HepG2 (cell line): ENCODE measurements at regions of chr16 and their contacts with region 1.

Region 1: DNA sequence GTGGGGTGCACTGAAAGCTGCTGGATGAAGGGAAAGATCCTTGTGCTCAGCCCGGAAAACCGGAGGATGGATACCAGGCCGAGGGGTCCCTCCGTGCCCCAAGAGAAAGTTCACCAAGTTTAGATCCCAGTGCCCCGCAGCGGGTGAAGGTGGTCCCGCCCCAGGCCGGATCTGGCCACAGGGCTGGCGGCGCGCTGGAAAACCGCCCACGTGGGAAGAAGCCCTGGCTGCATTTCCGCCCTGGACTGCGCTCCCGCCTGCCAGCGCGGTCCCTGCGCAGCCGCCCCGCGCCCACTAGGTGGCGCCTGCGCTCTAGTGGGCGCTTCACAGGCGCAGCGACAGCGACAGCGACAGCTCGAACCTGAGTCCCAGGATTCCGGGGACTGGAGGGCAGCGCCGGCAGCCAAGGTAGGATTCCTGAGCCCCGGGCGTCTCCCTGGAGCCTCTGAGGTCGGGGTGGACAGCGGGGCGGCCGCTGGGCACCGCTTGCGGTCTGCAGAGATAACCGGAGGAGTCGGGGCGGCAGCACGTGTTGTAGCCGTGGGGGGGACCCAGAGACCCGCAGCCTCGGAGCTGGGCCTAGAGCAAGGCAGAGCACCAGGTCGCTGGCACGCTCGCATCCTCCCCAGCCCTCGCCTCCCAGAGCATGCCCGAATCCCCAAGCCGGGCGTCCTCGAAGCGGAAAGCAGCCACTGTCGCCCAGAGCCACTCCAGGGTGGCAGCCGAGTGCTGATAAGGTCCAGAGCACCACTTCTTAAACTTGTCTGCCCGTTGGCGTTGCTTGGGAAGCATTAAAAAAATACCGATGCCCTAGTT is at the start of gene CHD9:
- DNase-seq: peak; percentile 90
- ATAC-seq: peak; percentile 87
- H3K4me3 ChIP-seq: peak within 1 kb of the TSS; percentile 73 to 88 (median 76)
- H3K27ac ChIP-seq: peak within 1 kb of the TSS; percentile 85
- H3K4me1 ChIP-seq: peaks cover 74% of the 10 kb centered on the region
- H3K27me3 ChIP-seq: no peaks in the 10 kb centered on the region; a peak in 1 of 5 replicates
- CTCF ChIP-seq: peak; percentile 100
- EP300 ChIP-seq: peak in 1 of 2 experiments; percentile 33; a peak in 1 of 4 replicates
- POLR2A ChIP-seq: peak; percentile 64 to 70
- RAD21 ChIP-seq: peak; percentile 100
- total RNA-seq, gene CHD9: 27.7 and 31.0 TPM in 2 replicates

Region 2: GRCh38 chr16:53099318-53100130 is 44.6 kb after region 1 on chr16:
- CTCF ChIA-PET with region 1: no interaction called
- POLR2A ChIA-PET with region 1: interaction called, 22 read pairs
- in situ Hi-C with region 1: no loop called
- intact Hi-C with region 1: loop called (anchors 1 kb)
- DNase-seq: peak; percentile 88
- ATAC-seq: peak; percentile 94
- H3K4me3 ChIP-seq: peak overlapping the region; percentile 57 to 74 (median 67)
- H3K27ac ChIP-seq: peak overlapping the region; percentile 78
- H3K4me1 ChIP-seq: peaks cover 41% of the 10 kb centered on the region
- H3K27me3 ChIP-seq: no peaks in the 10 kb centered on the region; a peak in 1 of 5 replicates
- CTCF ChIP-seq: no peak
- EP300 ChIP-seq: peak in 1 of 2 experiments; percentile 31; a peak in 1 of 4 replicates
- POLR2A ChIP-seq: peak; percentile 61 to 83
- RAD21 ChIP-seq: 0 out of 2 replicates have a peak, but pooled peaks have one; percentile 50

Region 3: DNA sequence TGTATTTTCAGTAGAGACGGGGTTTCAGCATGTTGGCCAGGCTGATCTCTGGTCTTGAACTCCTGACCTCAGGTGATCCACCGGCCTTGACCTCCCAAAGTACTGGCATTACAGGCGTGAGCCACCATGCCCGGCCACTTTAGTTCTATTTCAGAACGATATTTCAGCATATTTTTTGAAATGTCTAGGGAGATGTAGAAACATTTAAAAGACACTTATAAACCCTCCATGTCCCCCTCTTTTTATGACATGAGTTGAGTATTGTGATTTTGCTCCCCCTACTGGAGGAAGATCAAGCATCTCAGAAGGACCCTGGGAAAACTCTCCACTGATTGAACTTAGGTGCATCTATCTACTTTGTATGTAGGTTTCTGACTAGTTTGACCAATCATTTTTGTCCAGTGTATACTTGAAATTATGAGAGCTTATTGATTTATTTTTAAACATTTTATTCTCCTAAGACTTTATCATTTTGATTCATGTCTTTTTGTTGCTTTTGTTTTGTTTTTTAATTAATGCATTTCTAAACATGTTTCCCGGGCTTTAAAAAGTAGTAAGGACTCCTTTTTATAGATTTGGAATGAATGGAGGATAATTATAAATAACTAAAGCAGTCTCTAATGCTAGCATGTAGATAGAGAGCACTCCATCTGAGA is 105.0 kb after region 1 on chr16:
- CTCF ChIA-PET with region 1: interaction called, 23 read pairs
- POLR2A ChIA-PET with region 1: interaction called, 3 read pairs
- in situ Hi-C with region 1: loop called (anchors 10 kb)
- intact Hi-C with region 1: loop called (anchors 1 kb)
- DNase-seq: peak; percentile 60
- ATAC-seq: peak; percentile 87
- H3K4me3 ChIP-seq: no peak overlapping the region
- H3K27ac ChIP-seq: no peak overlapping the region
- H3K4me1 ChIP-seq: peaks cover 5% of the 10 kb centered on the region
- H3K27me3 ChIP-seq: no peaks in the 10 kb centered on the region
- CTCF ChIP-seq: peak; percentile 67
- EP300 ChIP-seq: no peak
- POLR2A ChIP-seq: no peak
- RAD21 ChIP-seq: no peak

Region 4: GRCh38 chr16:53220585-53220984 is 165.7 kb after region 1 on chr16:
- CTCF ChIA-PET with region 1: no interaction called
- POLR2A ChIA-PET with region 1: no interaction called
- in situ Hi-C with region 1: no loop called
- intact Hi-C with region 1: loop called (anchors 1 kb)
- DNase-seq: peak; percentile 20
- ATAC-seq: peak; percentile 66; the same call in 2 of the 3 replicates
- H3K4me3 ChIP-seq: no peak overlapping the region
- H3K27ac ChIP-seq: no peak overlapping the region
- H3K4me1 ChIP-seq: no peaks in the 10 kb centered on the region
- H3K27me3 ChIP-seq: no peaks in the 10 kb centered on the region
- CTCF ChIP-seq: peak; percentile 53
- EP300 ChIP-seq: no peak
- POLR2A ChIP-seq: no peak
- RAD21 ChIP-seq: no peak

Region 5: DNA sequence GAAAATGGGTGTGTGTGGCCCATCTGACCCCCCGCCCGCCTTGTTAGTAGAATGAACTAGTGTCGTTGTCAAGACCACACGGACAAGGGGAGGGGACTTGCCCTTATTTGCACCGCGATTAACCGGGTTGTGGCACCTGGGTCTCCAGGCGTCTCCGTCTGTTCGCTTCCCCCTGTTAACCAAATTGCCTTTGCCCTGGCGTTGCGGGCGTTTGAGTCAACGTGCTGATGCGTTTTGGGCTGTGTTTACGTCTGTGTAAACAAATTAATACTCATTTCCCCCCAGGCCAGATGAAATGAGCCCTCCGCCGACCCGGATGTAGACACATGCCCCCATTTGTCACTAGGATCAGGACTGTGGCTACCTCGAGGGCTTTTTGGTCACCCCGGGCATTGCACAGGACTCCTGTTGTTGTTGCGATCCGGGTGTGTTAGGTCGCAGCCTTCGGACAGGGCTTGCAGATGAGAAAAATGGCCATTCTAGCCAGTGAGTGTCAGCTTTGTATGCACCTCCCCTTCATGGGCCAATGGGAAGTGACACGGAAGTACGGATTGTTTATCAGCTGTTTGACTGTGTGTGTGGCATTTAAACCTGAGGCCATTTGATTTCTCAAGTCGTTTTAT is 380.3 kb after region 1 on chr16:
- CTCF ChIA-PET with region 1: no interaction called
- POLR2A ChIA-PET with region 1: no interaction called
- in situ Hi-C with region 1: loop called (anchors 10 kb)
- intact Hi-C with region 1: no loop called
- DNase-seq: peak; percentile 94
- ATAC-seq: peak; percentile 93
- H3K4me3 ChIP-seq: peak overlapping the region; percentile 93 to 98 (median 94)
- H3K27ac ChIP-seq: peak overlapping the region; percentile 81
- H3K4me1 ChIP-seq: peaks cover 33% of the 10 kb centered on the region
- H3K27me3 ChIP-seq: no peaks in the 10 kb centered on the region; a peak in 1 of 5 replicates
- CTCF ChIP-seq: no peak
- EP300 ChIP-seq: no peak
- POLR2A ChIP-seq: peak; percentile 79
- RAD21 ChIP-seq: peak; percentile 14; the same call in 1 of the 2 replicates